Activated naive CD4-positive, alpha-beta T cell treated with anti-CD3 and anti-CD28 coated beads, Interleukin-2, amount 10 ng/mL, durations not matched to agents 7 days and 5 days (primary cell): ENCODE measurements at regions of chr2 and their contacts with region 1.

Region 1: GRCh38 chr2:64644177-64645004 is 9.3 kb downstream of the SERTAD2 start:
- DNase-seq: peak; percentile 74
- H3K4me3 Mint-ChIP-seq: peak overlapping the region; percentile 77
- H3K27ac Mint-ChIP-seq: peak overlapping the region; percentile 92
- H3K4me1 Mint-ChIP-seq: peaks cover 74% of the 10 kb centered on the region
- H3K27me3 Mint-ChIP-seq: no peaks in the 10 kb centered on the region

Region 2: DNA sequence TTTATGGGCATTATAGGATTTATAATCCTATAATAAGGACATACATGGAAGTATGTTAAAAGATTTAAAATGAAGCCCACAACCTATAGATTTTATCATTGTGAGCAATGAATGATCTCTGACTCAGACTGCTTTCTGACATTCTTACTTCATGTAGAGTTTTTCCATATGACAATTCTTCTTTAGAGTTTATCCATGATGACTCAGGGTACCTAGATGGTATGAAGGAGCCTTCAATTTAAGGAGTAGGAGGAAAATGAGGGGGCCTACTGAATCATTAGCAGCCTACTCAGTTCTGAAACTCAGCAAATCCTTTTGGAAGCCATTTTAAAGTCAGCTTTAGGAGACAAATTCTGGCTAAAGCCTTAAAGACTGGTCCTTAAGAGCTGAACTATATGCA is 510.6 kb before region 1 on chr2:
- CTCF ChIA-PET with region 1: no interaction called
- DNase-seq: no peak
- H3K4me3 Mint-ChIP-seq: no peak overlapping the region
- H3K27ac Mint-ChIP-seq: no peak overlapping the region
- H3K4me1 Mint-ChIP-seq: peaks cover 49% of the 10 kb centered on the region
- H3K27me3 Mint-ChIP-seq: no peaks in the 10 kb centered on the region

Region 3: DNA sequence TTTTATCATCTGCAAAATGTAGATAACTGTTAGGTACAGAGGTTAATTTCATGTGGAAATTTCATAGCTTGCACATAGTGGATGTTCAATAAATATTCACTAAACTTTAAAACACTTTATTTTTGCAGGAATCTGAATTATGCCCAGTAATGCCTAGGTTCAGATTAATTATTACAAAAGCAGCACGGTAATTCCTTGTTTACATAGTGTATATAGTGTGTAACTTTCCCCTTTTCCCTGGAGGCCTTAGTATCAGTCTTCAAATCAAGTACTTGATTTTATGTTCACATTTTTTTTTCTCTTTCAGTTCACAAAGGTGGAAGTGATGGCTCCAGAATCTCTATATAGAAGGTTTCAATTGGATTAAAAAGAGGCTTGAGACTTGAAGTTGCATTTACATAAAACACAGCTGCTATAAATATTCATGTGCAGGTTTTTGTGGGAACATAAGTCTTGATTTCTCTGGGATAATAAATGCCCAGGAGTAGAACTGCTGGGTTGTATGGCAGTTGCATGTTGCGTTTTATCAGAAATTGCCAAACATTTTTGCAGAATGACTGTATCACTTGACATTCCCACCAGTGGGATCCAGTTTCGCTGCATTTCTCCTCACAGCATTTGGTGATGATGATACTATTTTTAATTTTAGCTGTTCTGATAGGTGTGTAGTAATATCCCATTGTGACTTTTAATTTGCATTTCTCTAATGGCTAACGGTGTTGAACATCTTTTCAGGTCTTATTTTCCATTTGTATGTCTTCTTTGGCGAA is 218.0 kb before region 1 on chr2:
- CTCF ChIA-PET with region 1: no interaction called
- DNase-seq: no peak
- H3K4me3 Mint-ChIP-seq: no peak overlapping the region
- H3K27ac Mint-ChIP-seq: no peak overlapping the region
- H3K4me1 Mint-ChIP-seq: no peaks in the 10 kb centered on the region
- H3K27me3 Mint-ChIP-seq: peaks cover 29% of the 10 kb centered on the region

Region 4: DNA sequence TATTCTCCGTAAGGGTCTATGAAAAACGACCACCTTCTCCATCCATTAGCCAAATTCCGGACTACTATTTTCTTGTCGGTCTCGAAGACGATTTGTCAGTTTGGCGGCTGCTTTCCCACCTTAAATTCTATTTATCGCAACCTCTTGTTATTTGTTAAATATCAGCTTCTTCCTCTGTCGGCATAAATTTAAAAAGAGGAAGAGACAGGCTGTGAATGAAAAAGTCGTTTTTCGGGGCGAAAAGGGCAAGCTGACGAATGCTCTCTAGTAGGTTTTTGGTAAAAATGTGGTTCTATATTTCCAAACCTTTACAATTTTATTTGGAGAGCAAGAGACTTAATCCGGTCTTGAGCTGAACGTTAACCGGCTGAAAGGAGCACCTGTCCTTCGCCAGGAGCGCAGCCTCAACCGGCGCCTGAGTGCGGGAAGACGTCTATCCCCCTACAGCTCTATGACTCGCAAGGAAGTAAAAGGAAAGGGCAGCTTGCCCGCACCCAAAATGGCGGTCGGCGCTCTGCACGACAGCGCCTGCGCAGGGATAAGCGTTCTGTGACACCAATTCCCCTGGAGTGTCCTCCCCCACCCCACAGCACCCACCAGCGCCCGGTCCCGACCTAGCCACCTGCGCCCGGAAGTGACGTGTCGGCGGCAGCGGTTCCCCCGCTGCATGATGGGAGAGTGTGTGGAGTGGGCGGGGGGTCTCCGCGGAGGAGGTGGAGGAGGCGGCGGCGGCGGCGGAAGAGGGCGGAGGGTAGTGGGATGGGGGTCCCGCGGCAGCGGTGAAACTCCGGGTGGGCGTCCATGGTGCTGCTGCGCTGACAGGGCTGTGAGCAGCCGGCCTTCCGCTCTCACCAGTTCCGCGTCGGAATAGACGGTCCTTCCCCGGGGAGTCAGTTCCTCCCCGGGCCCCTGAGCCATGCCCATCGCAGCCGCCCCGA is 120.5 kb before region 1 on chr2 and contains the start of gene AFTPH:
- CTCF ChIA-PET with region 1: interaction called, 13 read pairs
- DNase-seq: peak; percentile 100
- H3K4me3 Mint-ChIP-seq: peak within 1 kb of the TSS; percentile 99
- H3K27ac Mint-ChIP-seq: peak within 1 kb of the TSS; percentile 99
- H3K4me1 Mint-ChIP-seq: peaks cover 39% of the 10 kb centered on the region
- H3K27me3 Mint-ChIP-seq: peaks cover 8% of the 10 kb centered on the region

Region 5: DNA sequence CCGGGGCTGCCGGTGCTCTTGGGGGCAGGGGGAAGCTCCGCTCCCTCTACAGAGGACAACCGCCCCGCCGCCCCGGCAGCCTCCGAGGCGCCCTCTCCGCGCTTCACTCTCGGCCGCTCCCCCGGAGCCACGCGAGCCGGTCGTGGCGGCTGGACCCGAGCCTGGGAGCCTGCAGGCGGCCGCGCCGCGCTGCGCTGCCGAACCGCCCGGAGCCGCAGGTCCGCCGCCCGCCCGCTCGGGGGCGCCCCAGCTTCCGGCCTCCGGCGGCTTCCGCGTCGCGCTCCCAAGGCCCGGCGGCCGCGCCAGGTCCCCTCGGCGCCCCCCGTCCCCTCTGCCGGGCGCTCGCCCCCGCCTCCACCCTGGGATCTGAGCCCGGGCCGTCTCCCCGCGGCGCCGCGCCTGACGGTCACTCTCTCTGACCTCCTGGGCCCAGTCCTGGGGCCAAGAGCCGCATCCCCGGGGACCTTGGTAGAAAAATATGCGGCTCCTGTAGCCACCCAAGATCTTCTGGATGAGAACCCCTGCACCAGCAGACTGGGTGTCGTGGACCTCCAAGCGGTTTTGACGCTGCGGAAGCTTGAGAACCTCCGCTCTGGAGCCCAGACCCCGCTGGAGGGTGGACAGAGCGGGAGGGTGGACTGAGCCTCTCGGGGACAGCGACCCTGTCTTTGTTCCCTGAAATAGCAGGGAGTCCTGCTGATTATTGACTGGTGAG is 35.0 kb before region 1 on chr2:
- CTCF ChIA-PET with region 1: interaction called, 11 read pairs
- DNase-seq: peak; percentile 75
- H3K4me3 Mint-ChIP-seq: peak overlapping the region; percentile 72
- H3K27ac Mint-ChIP-seq: no peak overlapping the region
- H3K4me1 Mint-ChIP-seq: peaks cover 33% of the 10 kb centered on the region
- H3K27me3 Mint-ChIP-seq: peaks cover 45% of the 10 kb centered on the region

Region 6: DNA sequence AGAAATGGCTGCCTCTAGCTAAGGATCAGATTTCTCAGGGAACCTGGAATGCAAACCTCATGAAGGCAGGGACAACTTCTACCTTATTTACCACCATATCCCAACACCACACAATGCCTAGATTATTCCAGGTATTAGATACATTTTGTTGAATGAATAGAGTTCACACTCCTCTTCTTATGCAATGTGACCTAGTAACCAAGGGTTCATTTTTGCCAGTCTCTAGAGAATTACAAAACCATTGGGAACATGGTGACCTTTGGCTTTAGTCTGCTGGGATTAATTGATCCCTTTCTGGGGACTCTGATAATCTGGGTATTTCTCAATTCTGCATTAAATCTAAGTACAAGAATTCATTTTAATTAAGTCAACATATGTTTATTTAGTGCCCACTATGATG is 44.5 kb after region 1 on chr2:
- CTCF ChIA-PET with region 1: no interaction called
- DNase-seq: no peak
- H3K4me3 Mint-ChIP-seq: no peak overlapping the region
- H3K27ac Mint-ChIP-seq: no peak overlapping the region
- H3K4me1 Mint-ChIP-seq: no peaks in the 10 kb centered on the region
- H3K27me3 Mint-ChIP-seq: no peaks in the 10 kb centered on the region

Region 7: DNA sequence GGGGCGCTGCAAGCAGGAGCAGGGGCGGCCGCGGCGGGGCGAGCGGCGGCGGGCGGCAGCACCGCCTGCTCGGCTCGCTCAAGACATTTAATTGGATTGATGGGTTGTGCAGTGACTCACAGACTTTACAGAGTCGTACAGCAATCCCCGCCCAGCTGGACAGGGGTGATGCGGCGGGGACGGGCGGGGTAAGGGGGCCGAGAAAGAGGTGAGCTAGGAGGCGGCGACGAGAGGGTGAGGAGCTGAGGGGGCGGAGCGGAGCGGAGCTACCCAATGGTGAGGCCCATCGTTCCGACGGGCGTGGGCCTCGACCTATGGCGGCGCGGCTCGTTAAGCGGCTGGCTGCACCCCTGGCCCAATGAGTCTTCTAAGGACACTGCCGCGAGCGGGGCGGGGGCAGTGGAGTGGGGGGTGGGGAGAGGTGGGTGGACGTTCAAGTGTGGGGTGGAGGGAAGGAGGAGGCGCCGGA is 106.5 kb after region 1 on chr2:
- CTCF ChIA-PET with region 1: interaction called, 11 read pairs
- DNase-seq: peak; percentile 98
- H3K4me3 Mint-ChIP-seq: peak overlapping the region; percentile 82
- H3K27ac Mint-ChIP-seq: peak overlapping the region; percentile 89
- H3K4me1 Mint-ChIP-seq: peaks cover 26% of the 10 kb centered on the region
- H3K27me3 Mint-ChIP-seq: peaks cover 3% of the 10 kb centered on the region

Region 8: DNA sequence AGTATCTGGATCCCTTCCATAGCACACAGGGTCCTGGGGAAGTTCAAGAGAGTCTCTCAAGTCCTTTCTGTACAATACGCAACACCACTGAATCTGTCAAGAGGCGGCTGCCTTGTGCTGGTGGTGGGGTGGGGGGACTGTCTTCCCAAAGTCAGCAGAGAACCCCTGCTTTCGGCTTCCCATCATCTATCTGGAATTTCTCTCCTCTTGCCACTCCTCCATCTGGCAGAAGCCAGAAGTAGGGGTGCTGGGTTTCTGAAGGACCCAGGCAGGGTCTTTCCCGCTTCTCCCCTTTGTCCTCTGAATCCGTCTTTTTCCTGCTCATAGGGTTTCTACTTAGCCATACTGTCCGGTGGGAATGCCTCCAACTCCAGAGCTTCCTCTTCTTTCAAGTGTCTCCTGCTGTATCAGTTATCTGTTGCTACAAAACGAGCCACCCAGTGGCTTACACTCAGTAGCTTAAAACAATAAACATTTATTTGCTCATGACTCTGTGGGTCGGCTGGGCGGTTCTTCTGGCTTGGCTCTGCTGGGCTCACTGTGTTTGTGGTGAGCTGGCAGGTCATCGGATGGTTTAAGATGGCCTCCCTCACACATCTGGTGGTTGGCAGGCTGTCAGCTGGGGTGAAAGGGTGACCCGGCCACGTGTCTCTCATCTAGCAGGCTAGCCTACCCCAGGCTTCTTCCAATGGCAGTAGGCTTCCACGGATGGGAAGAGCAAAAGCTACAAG is 222.2 kb after region 1 on chr2:
- CTCF ChIA-PET with region 1: interaction called, 25 read pairs
- DNase-seq: no peak
- H3K4me3 Mint-ChIP-seq: no peak overlapping the region
- H3K27ac Mint-ChIP-seq: no peak overlapping the region
- H3K4me1 Mint-ChIP-seq: no peaks in the 10 kb centered on the region
- H3K27me3 Mint-ChIP-seq: peaks cover 45% of the 10 kb centered on the region

Region 9: GRCh38 chr2:65186872-65187851 is 542.8 kb after region 1 on chr2:
- CTCF ChIA-PET with region 1: no interaction called
- DNase-seq: peak; percentile 78
- H3K4me3 Mint-ChIP-seq: no peak overlapping the region
- H3K27ac Mint-ChIP-seq: peak overlapping the region; percentile 1
- H3K4me1 Mint-ChIP-seq: peaks cover 10% of the 10 kb centered on the region
- H3K27me3 Mint-ChIP-seq: peaks cover 36% of the 10 kb centered on the region